ENCODE measurements at regions of chr2 and their contacts with region 1.

Region 1: DNA sequence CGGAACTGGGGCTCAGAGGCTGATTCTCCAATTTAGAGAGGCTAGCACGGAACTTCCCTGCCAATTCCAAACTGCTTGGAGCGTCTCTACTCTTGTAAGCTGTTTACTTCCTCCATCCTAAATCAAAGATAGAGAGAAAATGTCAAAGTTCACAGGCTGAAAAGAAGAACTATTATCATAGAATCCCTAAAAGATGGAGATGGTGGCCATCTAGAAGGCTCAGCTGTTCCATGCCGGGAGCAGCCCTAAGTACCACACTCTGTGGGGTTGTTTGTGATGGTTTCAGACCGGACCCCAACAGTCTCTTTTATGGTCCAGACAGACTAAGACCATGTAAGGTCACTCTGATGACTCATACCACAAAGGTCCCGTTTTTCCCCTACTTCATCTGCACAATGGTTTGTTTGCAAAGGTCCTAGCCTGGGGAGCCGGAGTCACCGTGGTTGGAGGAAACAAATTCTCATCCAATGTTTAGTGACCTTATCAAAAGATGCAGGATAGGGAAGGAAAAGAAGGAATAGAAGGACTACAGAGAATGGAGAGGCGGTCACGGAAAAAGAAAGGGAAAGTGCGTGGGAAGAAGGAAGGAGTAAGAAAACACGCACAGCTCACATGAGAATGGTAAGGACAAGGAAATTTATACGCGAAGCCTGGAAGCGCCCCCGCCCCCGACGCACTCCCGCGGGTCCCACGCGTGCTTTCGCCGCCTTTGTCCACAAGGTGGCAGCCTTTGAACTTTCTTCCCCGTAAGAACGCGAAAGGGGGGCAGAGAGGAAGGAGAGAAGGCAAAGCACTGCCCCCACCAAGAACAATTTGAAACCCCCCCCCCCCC is 453 bp upstream of the ANTXR1 start:
- DNase-seq: no peak
- H3K4me3 ChIP-seq: peak overlapping the region; percentile 81 to 86
- H3K27ac ChIP-seq: peak overlapping the region; percentile 95
- H3K4me1 ChIP-seq: peaks cover 36% of the 10 kb centered on the region
- H3K27me3 ChIP-seq: no peaks in the 10 kb centered on the region
- CTCF ChIP-seq: peak; percentile 63 to 90 (median 84)
- POLR2A ChIP-seq: no peak

Region 2: DNA sequence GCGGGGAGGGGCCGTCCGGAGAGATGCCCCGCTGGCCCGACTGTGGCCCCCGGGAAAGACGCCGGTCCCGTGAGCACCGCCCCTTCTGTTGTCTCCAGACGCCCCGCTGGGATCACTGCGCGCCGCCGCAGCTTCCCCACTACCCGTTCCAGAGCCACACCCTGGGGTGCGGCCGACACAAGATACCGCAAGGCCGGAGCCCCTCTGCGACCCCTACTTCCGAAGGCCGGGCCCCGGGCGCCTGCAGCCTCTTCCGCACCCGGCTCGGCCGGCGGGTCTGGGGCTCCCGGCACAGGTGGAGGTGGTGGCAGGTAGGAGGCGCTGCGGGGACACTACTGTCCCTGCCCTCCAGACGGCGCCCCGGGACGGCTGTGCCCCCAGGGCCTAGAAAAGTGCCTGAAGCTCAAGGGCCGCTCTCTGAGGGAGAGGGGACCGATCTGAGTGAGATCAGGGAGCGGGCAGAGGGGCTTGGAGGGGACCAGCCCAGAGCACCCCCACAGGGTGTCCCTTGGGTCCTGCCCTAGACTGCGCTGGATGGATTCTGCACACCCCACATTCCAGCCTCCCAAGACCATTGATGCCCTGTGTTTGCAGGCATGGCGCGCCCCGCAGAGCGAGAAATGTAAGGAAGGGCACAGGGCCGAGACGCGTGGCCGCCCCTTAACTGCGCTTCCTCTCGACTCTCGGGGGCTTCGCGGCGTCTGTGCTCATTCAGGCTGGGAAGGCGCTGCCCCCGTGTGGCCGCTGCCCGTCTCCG is 294.5 kb after region 1 on chr2:
- intact Hi-C with region 1: loop called (anchors 2 kb)
- DNase-seq: no peak
- H3K4me3 ChIP-seq: peak overlapping the region; percentile 60 to 63
- H3K27ac ChIP-seq: peak overlapping the region; percentile 92
- H3K4me1 ChIP-seq: peaks cover 54% of the 10 kb centered on the region
- H3K27me3 ChIP-seq: no peaks in the 10 kb centered on the region
- CTCF ChIP-seq: peak; percentile 29 to 87 (median 72)
- POLR2A ChIP-seq: no peak

Region 3: DNA sequence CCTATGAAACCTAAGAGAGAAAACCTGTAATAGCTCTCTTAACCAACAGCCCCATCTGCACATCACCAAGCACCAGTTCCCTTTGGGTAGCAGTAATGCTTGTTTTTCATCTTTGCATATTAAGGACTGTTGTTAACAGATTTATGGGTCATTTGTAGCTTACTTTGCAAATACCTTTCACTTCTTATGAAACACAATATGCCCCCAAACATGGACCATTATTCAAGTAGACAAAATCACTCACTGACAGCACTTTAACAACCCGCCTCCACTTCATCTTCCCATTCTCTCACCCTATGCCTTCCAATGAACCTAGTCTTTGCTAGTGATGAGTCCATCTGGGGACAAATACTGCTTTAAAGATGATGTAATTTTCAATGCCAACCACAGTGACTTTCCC is 310.1 kb after region 1 on chr2:
- intact Hi-C with region 1: no loop called
- DNase-seq: no peak
- H3K4me3 ChIP-seq: no peak overlapping the region
- H3K27ac ChIP-seq: no peak overlapping the region
- H3K4me1 ChIP-seq: no peaks in the 10 kb centered on the region
- H3K27me3 ChIP-seq: no peaks in the 10 kb centered on the region
- CTCF ChIP-seq: no peak
- POLR2A ChIP-seq: no peak

Measured in vagina (tissue), 2 donors.